ENCODE measurements at regions of chr15 and their contacts with region 1.

Region 1: DNA sequence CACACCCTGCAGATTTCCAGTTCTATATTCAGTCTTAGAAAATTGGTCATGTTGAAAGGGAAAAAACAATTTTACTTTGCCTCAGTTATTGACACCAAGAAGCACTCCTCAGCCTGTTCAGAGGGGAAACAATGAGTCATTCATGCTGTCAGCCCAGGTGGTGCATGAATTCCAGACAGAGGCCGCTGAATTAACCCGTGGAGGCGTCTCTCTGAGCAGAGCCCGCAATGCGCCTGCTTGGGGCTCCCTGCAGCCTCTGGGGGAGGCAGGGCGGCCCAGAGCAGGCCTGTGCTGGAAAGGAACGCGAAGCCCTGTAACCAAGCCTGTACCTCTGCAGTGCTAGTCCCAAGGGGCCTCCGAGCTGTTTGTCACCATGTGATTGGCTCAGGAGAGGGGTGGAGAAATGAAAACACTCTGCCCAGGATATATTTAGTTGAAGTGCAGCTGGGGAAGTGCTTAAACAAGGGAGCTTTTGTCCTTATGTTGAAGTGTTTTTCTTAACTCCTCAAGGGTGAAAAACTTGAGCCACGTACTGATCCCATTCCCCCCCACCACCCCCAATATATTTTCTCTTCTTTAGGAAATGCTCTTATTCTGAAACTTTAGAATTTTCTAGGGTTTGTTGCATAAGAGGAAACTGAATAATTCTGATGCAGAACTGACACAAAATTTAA is 68.3 kb upstream of the CHD2 start:
- DNase-seq: peak; percentile 99
- H3K4me3 ChIP-seq: peak overlapping the region; percentile 26
- H3K27ac ChIP-seq: peak overlapping the region; percentile 97
- H3K4me1 ChIP-seq: peaks cover 40% of the 10 kb centered on the region
- H3K27me3 ChIP-seq: no peaks in the 10 kb centered on the region
- CTCF ChIP-seq: no peak

Region 2: GRCh38 chr15:92820236-92821021 is 11.4 kb before region 1 on chr15:
- CTCF ChIA-PET with region 1: no interaction called
- POLR2A ChIA-PET with region 1: interaction called, 10 read pairs
- intact Hi-C with region 1: no loop called
- DNase-seq: peak; percentile 97
- H3K4me3 ChIP-seq: peak overlapping the region; percentile 31
- H3K27ac ChIP-seq: peak overlapping the region; percentile 84
- H3K4me1 ChIP-seq: peaks cover 58% of the 10 kb centered on the region
- H3K27me3 ChIP-seq: no peaks in the 10 kb centered on the region
- CTCF ChIP-seq: no peak

Region 3: DNA sequence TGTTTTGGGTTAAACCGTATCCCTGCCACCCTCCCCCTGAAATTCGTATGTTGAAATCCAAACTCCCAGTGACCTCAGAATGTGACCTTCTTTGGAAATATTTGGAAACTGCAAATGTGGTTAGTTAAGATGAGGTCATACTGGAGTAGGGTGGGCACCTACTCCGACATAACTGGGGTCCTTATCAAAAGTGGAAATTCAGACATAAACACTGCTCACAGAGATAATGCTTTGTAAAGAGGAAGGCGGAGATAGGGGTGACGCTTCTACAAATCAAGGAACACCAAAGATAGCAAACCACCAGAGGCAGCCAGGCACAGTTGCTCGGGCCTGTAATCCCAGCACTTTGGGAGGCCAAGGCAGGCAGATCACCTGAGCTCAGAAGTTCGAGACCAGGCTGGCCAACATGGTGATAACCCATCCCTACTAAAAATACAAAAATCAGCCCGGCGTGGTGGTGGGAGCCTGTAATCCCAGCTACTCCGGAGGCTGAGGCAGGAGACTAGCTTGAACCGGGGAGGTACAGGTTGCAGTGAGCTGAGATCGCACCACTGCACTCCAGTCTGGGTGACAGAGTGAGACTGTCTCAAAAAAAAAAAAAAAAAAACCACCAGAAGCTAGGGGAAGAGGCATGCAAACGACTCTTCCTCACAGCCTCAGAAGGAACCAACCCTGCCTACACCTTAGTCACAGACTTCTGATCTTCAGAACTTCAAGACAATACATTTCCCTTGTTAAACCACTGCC is 17.2 kb after region 1 on chr15:
- CTCF ChIA-PET with region 1: no interaction called
- POLR2A ChIA-PET with region 1: interaction called, 18 read pairs
- intact Hi-C with region 1: no loop called
- DNase-seq: no peak
- H3K4me3 ChIP-seq: no peak overlapping the region
- H3K27ac ChIP-seq: no peak overlapping the region
- H3K4me1 ChIP-seq: peaks cover 23% of the 10 kb centered on the region
- H3K27me3 ChIP-seq: no peaks in the 10 kb centered on the region
- CTCF ChIP-seq: no peak

Region 4: DNA sequence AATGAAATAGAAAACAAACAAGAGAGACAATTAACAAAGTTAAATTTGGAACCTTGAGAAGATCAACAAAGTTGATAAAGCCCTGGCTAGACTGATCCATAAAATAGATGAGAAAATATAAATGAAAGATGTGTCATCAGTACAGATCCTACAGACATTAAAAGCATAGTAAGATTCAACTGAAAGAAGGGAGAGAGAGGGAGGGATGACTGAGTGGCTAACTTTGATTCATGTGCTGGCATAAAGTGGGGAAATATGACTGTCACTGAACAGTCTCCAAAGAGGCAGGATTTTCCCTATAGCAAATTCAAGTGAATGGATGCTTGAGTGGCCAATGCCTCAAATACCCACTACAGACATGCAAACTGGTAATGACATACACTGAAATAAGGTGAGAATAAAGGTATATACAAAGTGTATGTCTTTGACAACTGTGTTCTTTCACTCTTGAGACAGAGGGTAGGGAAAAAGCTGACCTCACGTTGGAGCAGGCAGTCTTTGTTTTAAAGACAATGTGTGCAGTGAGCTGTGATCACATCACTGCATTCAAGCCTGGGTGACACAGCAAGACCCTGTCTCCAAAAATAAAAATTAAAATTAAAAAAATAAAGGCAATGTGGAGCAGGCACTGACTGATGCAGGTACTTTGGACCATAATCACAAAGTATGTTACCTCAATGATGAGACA is 32.5 kb after region 1 on chr15:
- CTCF ChIA-PET with region 1: no interaction called
- POLR2A ChIA-PET with region 1: no interaction called
- intact Hi-C with region 1: no loop called
- DNase-seq: no peak
- H3K4me3 ChIP-seq: no peak overlapping the region
- H3K27ac ChIP-seq: no peak overlapping the region
- H3K4me1 ChIP-seq: peaks cover 2% of the 10 kb centered on the region
- H3K27me3 ChIP-seq: no peaks in the 10 kb centered on the region
- CTCF ChIP-seq: no peak

Region 5: DNA sequence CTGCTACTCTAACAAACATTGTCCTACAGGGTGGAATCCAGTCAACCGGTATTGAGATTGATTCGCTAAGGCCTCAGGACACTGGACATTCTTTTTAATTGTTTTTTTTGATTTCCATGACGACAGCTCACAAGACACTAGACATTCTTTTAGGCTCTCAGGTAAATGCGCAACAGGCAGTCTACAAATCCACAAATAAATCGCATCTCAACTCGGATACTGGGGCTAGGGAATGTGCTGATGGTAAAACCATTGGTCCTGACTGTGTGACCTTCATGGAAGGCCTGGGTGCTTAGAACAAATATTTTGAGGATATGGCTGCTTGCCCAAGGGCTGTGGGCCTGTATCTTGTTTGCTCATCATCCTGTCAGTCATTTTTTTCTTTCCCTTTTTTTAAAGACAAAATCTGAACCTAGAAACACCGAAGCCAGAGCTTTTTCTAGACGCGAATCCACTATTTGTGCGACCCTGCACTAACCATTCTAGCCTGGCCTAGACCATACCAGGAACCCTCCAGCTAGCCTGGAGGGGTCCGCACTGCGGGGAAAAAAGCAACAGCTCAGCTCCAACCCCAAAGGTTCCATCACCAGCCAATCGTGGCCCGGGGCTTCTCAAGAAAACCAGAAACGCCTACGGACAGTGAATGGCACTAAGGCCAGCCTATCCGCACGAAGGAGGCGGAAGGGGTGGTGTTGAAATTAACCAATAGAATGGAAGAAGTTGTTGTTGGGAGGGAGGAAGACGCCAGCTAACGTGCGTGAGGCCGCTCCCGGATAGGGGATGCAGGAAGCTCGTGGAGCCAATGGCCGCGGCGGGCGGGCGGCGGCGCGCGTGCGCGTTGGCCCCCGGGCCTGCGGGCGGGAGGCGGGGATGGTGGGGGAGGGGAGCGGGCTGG is 50.3 kb after region 1 on chr15:
- CTCF ChIA-PET with region 1: no interaction called
- POLR2A ChIA-PET with region 1: interaction called, 19 read pairs
- intact Hi-C with region 1: loop called (anchors 1 kb)
- DNase-seq: peak; percentile 100
- H3K4me3 ChIP-seq: peak overlapping the region; percentile 91
- H3K27ac ChIP-seq: peak overlapping the region; percentile 85
- H3K4me1 ChIP-seq: peaks cover 20% of the 10 kb centered on the region
- H3K27me3 ChIP-seq: no peaks in the 10 kb centered on the region
- CTCF ChIP-seq: no peak